AG04449 (cell line): ENCODE measurements at regions of chr6 and their contacts with region 1.

Region 1: GRCh38 chr6:44439270-44440045 is 52.0 kb downstream of the CDC5L start:
- DNase-seq: no peak
- H3K4me3 ChIP-seq: no peak overlapping the region
- CTCF ChIP-seq: no peak

Region 2: DNA sequence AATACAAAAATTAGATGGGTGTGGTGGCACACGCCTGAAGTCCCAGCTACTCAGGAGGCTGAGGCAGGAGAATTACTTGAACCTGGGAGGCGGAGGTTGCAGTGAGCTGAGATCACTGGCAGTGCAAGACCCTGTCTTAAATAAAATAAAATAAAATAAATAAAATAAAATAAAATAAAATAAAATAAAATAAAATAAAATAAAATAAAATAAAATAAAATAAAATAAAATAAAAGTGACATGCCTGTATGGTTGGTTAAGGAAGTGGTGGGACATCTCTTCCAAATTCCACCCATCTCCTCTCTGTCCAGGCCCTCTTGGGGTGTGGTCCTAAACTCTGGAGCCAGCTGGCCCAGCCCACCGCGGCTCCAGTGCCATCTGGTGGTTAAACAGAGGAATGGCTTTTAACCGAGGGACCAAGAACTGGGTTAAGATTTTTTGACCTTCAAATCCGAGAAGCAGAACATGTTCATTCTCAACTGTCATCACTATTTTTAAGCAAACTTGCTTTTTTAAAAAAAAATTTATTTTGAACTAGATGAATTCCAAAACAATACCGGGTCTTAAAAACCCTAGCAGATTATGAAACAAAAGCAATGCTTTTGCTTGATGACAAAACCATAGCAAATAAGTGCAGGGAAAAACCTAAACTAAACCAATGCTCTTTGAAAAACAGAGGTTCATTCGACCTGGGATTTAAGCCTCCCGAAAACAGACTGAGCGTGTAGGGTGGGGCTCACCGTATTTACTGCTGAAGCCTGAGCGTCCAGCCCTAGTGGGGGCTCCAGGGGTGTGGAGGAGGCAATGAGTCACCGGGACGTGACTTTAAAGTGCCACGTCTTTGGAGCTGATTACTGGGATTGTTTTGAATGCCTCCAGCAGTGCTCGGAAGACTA is 16.9 kb after region 1 on chr6:
- CTCF ChIA-PET with region 1: interaction called, 367 read pairs
- POLR2A ChIA-PET with region 1: no interaction called
- DNase-seq: no peak
- H3K4me3 ChIP-seq: no peak overlapping the region
- CTCF ChIP-seq: peak; percentile 79